Right ventricle myocardium inferior (tissue), 1 donor: ENCODE measurements at regions of chr22 and their contacts with region 1.

Region 1: GRCh38 chr22:43385770-43386641 is 25.8 kb upstream of the MPPED1 start:
- DNase-seq: peak; percentile 90
- ATAC-seq: peak; percentile 87

Region 2: GRCh38 chr22:43230971-43231723 is 154.9 kb before region 1 on chr22:
- intact Hi-C with region 1: loop called (anchors 1 kb)
- DNase-seq: no peak
- ATAC-seq: no peak

Region 3: GRCh38 chr22:43273902-43274484 is 112.0 kb before region 1 on chr22:
- intact Hi-C with region 1: loop called (anchors 1 kb)
- DNase-seq: no peak
- ATAC-seq: peak; percentile 56

Region 4: GRCh38 chr22:43313244-43313889 is 72.6 kb before region 1 on chr22:
- intact Hi-C with region 1: no loop called
- DNase-seq: peak; percentile 73
- ATAC-seq: peak; percentile 13

Region 5: DNA sequence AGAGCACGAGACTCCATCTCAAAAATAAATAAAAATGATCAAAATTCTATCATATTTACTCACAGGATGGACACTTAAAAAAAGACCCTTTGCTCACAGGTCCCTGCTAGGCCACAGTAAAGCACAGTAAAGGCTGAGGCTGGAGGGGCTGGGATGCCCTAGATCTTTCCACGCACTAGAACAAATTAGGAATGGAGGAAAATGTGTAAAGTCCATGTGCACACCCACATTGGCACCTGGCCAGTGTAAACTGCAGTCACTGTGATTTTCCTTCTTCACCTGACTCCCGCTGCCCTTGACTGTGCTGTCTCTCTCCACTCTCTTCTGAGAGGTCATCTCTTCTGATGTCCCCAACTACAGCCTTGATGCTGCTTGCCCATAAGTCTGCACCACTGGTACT is 230.6 kb after region 1 on chr22:
- intact Hi-C with region 1: no loop called
- DNase-seq: no peak
- ATAC-seq: no peak

Region 6: DNA sequence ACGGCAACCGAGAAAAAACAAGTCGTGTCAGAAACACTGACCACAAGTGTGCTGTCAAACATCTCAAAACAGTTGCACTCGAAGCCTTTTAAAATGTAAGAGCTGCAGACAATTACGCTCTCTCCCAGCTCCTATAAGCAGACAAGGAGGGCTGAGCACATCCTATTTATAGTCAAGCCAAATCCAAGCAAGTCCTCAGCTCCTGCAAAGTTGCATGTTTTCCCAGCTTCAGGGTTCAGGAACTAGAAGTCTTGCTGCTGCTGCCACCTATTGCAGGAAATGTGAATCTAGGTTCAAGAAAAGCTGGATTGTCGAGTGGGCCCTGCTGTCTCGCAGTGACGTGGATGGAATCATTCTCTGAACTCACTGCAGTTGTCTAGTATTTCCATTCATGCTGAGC is 410.6 kb after region 1 on chr22:
- intact Hi-C with region 1: loop called (anchors 2 kb)
- DNase-seq: no peak
- ATAC-seq: peak; percentile 75

Region 7: DNA sequence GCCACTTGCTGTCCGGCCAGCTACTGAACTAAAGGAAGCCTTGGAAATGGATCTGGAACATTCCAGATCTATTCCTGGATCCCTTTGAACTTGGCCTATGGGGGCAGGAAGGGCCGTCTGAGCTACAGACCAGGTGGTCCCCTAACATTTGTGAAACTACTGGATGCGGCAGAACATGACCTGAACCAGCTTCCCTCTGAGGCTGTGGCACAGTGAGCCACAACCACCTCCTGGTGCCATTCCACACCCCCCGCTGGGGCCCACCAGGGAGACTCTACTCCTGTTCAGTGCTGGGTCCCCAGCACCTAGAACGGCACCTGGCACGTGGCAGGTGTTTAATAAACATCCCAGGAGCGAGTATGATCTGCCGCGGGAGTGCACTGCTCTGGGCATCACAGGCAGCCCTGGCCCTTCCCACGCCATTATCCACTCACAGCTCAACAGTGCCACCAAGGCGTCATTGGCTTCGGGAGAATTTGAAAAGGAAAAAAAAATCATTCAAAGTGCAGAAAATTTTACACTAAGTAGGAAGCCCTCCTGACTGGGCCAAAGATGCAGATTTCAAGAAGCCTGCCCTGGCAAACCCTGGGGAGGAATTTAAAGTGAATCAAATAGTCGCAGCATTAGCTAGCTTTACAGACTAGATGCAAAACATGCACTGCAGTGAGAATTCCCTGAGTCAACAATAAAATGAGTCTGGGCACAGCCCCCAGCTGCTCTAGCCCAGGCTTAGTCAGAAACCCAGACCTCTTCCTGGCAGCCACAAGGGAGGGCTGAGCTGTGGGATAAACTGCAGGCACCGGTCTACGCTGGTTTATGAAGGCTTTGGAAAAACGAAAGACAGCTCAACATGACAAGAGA is 440.4 kb after region 1 on chr22:
- intact Hi-C with region 1: loop called (anchors 1 kb)
- DNase-seq: no peak
- ATAC-seq: no peak

Region 8: GRCh38 chr22:43884600-43885325 is 498.8 kb after region 1 on chr22:
- intact Hi-C with region 1: loop called (anchors 5 kb)
- DNase-seq: no peak
- ATAC-seq: no peak

Region 9: GRCh38 chr22:44625981-44626687 is 1240.1 kb after region 1 on chr22:
- intact Hi-C with region 1: loop called (anchors 5 kb)
- DNase-seq: no peak
- ATAC-seq: peak; percentile 66